ENCODE measurements at regions of chr19 and their contacts with region 1.

Region 1: GRCh38 chr19:41872775-41873647 is 4.1 kb upstream of the CD79A start:
- DNase-seq: peak; percentile 80
- ATAC-seq: no peak
- H3K4me3 Mint-ChIP-seq: no peak overlapping the region
- H3K27ac Mint-ChIP-seq: peak overlapping the region; percentile 95
- H3K4me1 Mint-ChIP-seq: peaks cover 80% of the 10 kb centered on the region
- H3K27me3 Mint-ChIP-seq: no peaks in the 10 kb centered on the region
- CTCF ChIP-seq: peak; percentile 84

Region 2: GRCh38 chr19:41883821-41884733 is 11.1 kb after region 1 on chr19:
- CTCF ChIA-PET with region 1: interaction called, 61 read pairs
- POLR2A ChIA-PET with region 1: interaction called, 282 read pairs
- intact Hi-C with region 1: no loop called
- DNase-seq: peak; percentile 94
- ATAC-seq: peak; percentile 73
- H3K4me3 Mint-ChIP-seq: peak overlapping the region; percentile 73
- H3K27ac Mint-ChIP-seq: peak overlapping the region; percentile 94
- H3K4me1 Mint-ChIP-seq: peaks cover 50% of the 10 kb centered on the region
- H3K27me3 Mint-ChIP-seq: no peaks in the 10 kb centered on the region
- CTCF ChIP-seq: no peak

Region 3: GRCh38 chr19:41928221-41928683 is 55.2 kb after region 1 on chr19 and contains the start of gene ERFL:
- CTCF ChIA-PET with region 1: interaction called, 11 read pairs
- POLR2A ChIA-PET with region 1: interaction called, 6 read pairs
- intact Hi-C with region 1: no loop called
- DNase-seq: peak; percentile 47
- ATAC-seq: peak; percentile 41
- H3K4me3 Mint-ChIP-seq: peak within 1 kb of the TSS; percentile 75
- H3K27ac Mint-ChIP-seq: peak within 1 kb of the TSS; percentile 72
- H3K4me1 Mint-ChIP-seq: peaks cover 25% of the 10 kb centered on the region
- H3K27me3 Mint-ChIP-seq: peaks cover 9% of the 10 kb centered on the region
- CTCF ChIP-seq: no peak
- total RNA-seq, gene ERFL: 1.5 to 1.6 TPM

Region 4: GRCh38 chr19:41939861-41940730 is 67.1 kb after region 1 on chr19:
- CTCF ChIA-PET with region 1: interaction called, 110 read pairs
- POLR2A ChIA-PET with region 1: interaction called, 62 read pairs
- intact Hi-C with region 1: loop called (anchors 5 kb)
- DNase-seq: peak; percentile 69
- ATAC-seq: peak; percentile 50
- H3K4me3 Mint-ChIP-seq: peak overlapping the region; percentile 78
- H3K27ac Mint-ChIP-seq: peak overlapping the region; percentile 90
- H3K4me1 Mint-ChIP-seq: peaks cover 44% of the 10 kb centered on the region
- H3K27me3 Mint-ChIP-seq: peaks cover 17% of the 10 kb centered on the region
- CTCF ChIP-seq: no peak

Region 5: GRCh38 chr19:41945135-41945766 is 72.2 kb after region 1 on chr19:
- CTCF ChIA-PET with region 1: interaction called, 110 read pairs
- POLR2A ChIA-PET with region 1: interaction called, 62 read pairs
- intact Hi-C with region 1: loop called (anchors 5 kb)
- DNase-seq: peak; percentile 99
- ATAC-seq: peak; percentile 87
- H3K4me3 Mint-ChIP-seq: peak overlapping the region; percentile 56
- H3K27ac Mint-ChIP-seq: peak overlapping the region; percentile 94
- H3K4me1 Mint-ChIP-seq: peaks cover 61% of the 10 kb centered on the region
- H3K27me3 Mint-ChIP-seq: peaks cover 8% of the 10 kb centered on the region
- CTCF ChIP-seq: no peak

Region 6: GRCh38 chr19:41951686-41952172 is 78.7 kb after region 1 on chr19:
- CTCF ChIA-PET with region 1: interaction called, 110 read pairs
- POLR2A ChIA-PET with region 1: interaction called, 62 read pairs
- intact Hi-C with region 1: loop called (anchors 5 kb)
- DNase-seq: peak; percentile 94
- ATAC-seq: peak; percentile 96
- H3K4me3 Mint-ChIP-seq: no peak overlapping the region
- H3K27ac Mint-ChIP-seq: peak overlapping the region; percentile 58
- H3K4me1 Mint-ChIP-seq: peaks cover 28% of the 10 kb centered on the region
- H3K27me3 Mint-ChIP-seq: no peaks in the 10 kb centered on the region
- CTCF ChIP-seq: peak; percentile 100

Region 7: DNA sequence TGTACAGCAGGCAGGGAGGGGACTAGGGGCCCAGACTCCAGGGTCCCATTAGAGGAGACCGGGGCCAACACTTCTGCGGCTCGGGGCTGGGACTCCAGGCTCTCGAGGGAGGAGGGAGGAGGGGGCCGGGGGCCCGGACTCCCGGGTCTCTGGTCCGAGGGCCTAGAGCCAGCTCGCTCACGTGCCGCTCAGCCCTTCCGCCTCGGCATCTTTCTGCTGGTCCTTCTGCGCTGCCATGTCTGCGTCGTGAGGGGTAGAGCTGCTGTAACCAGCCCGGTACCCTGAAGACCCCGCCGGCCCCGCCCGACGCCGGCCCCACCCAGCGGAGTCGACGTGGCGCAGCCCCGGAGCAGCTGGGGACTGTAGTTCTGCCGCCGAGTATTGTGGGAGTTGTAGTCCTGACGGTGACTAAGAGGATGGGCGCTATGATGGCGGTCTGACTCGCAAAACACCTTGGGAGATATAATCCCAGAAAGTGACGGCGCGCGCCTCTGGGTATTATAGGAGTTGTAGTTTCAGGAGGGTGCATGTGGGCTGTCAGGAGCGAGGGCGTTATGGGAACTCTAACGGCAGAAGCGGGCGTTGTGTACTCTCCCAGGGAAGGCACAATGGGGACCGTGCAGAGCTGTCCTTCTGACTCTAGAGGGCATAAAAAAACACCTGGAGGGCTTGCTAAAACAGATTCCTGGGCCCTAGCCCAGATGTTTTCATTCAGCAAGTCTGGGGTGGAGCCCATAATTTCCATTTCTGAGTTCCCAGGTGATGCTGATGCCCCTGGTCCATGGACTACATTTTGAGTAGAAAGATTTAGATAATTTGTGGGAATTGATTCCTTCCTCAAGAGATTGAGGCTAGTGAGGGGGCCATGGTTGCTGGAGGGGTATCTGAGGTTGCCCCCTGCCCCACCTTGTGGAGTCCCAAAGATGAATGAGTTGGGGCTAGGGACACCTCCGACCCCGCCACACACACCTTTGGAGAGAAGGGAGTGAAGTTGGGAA is 86.3 kb after region 1 on chr19 and contains the start of gene RABAC1:
- CTCF ChIA-PET with region 1: interaction called, 33 read pairs
- POLR2A ChIA-PET with region 1: interaction called, 37 read pairs
- intact Hi-C with region 1: no loop called
- DNase-seq: peak; percentile 94
- ATAC-seq: peak; percentile 89
- H3K4me3 Mint-ChIP-seq: peak within 1 kb of the TSS; percentile 82
- H3K27ac Mint-ChIP-seq: peak within 1 kb of the TSS; percentile 84
- H3K4me1 Mint-ChIP-seq: peaks cover 16% of the 10 kb centered on the region
- H3K27me3 Mint-ChIP-seq: no peaks in the 10 kb centered on the region
- CTCF ChIP-seq: peak; percentile 55
- total RNA-seq, gene RABAC1: 49.6 to 52.4 TPM

Measured in activated CD8-positive, alpha-beta T cell treated with anti-CD3 and anti-CD28 coated beads for 36 hours (primary cell).